ENCODE measurements at regions of chr20 and their contacts with region 1.

Region 1: DNA sequence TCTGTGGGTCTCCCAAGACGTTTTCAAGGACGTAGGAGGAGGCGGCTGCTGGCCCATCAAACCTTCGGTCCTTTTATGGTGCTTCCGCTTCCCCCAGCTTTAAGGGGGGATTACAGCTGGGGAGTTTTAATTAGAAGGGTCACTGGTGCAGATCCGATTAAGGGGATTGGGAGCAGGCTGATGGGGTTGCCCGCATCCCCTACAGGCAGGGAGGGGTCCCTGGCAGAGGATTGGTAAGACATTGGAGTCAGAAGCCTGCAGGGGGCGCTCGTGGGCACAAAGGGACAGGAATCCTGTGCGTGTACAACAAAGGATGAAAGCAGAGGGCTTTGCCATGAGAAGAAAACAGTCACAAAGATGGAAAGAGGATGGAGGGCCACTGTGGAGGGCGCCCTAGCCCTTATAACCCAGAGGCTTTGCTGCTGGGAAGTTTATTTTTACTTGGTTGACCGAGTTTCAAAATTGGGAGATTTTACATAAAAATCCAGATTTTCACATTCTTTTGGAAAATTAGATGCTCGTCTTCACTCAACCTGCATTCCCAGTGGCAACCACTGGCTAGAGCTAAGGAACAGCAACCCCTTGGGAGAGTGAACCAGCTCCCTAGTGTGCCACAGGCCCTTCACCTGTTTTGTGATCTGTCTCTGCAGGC is 97.9 kb downstream of the KCNB1 start:
- DNase-seq: no peak
- H3K4me3 ChIP-seq: no peak overlapping the region
- H3K27ac ChIP-seq: no peak overlapping the region
- H3K4me1 ChIP-seq: no peaks in the 10 kb centered on the region
- H3K27me3 ChIP-seq: no peaks in the 10 kb centered on the region
- CTCF ChIP-seq: peak; percentile 36 to 42 (median 42)
- POLR2A ChIP-seq: no peak

Region 2: DNA sequence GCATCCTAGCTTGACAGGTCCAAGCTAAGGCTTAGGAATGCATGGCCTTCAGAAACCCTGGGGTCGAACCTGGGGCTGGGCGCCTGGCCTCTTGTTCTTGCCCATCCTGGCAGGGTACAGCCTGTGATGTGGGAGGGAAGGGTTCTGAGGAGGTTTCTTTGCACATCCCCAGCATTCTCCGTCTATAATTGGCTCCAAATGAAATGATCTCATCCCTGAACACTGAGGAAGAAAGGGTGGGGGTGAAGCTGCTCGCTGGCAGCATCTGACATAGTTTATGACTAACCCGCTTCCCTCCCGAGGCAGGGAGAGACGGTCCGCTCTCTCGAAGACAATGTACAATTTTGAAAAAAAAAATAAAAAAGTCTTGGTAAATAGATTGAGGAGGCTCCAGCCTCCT is 39.6 kb before region 1 on chr20:
- intact Hi-C with region 1: loop called (anchors 2 kb)
- DNase-seq: peak; percentile 26
- H3K4me3 ChIP-seq: no peak overlapping the region
- H3K27ac ChIP-seq: peak overlapping the region; percentile 46 to 54
- H3K4me1 ChIP-seq: no peaks in the 10 kb centered on the region
- H3K27me3 ChIP-seq: no peaks in the 10 kb centered on the region
- CTCF ChIP-seq: no peak
- POLR2A ChIP-seq: no peak

Region 3: GRCh38 chr20:49583669-49584417 is 199.3 kb after region 1 on chr20:
- intact Hi-C with region 1: loop called (anchors 10 kb)
- DNase-seq: peak; percentile 51
- H3K4me3 ChIP-seq: no peak overlapping the region
- H3K27ac ChIP-seq: peak overlapping the region; percentile 34 to 49
- H3K4me1 ChIP-seq: peaks cover 5% of the 10 kb centered on the region
- H3K27me3 ChIP-seq: no peaks in the 10 kb centered on the region
- CTCF ChIP-seq: peak in 1 of 4 experiments; percentile 13
- POLR2A ChIP-seq: no peak

Measured in prostate gland (tissue), 2 donors.